Upper lobe of right lung (tissue), 1 donor: ENCODE measurements at regions of chr12 and their contacts with region 1.

Region 1: GRCh38 chr12:106386813-106387535 is 29.4 kb downstream of the POLR3B start:
- DNase-seq: no peak
- ATAC-seq: no peak
- H3K4me3 ChIP-seq: no peak overlapping the region
- H3K27ac ChIP-seq: no peak overlapping the region
- H3K4me1 ChIP-seq: no peaks in the 10 kb centered on the region
- H3K27me3 ChIP-seq: no peaks in the 10 kb centered on the region
- CTCF ChIP-seq: no peak

Region 2: GRCh38 chr12:106919910-106920544 is 533.1 kb after region 1 on chr12:
- intact Hi-C with region 1: loop called (anchors 5 kb)
- DNase-seq: no peak
- ATAC-seq: peak; percentile 68
- H3K4me3 ChIP-seq: no peak overlapping the region
- H3K27ac ChIP-seq: no peak overlapping the region
- H3K4me1 ChIP-seq: no peaks in the 10 kb centered on the region
- H3K27me3 ChIP-seq: peaks cover 12% of the 10 kb centered on the region
- CTCF ChIP-seq: peak; percentile 84

Region 3: GRCh38 chr12:107109741-107110719 is 723.1 kb after region 1 on chr12:
- intact Hi-C with region 1: loop called (anchors 5 kb)
- DNase-seq: no peak
- ATAC-seq: no peak
- H3K4me3 ChIP-seq: no peak overlapping the region
- H3K27ac ChIP-seq: no peak overlapping the region
- H3K4me1 ChIP-seq: peaks cover 1% of the 10 kb centered on the region
- H3K27me3 ChIP-seq: no peaks in the 10 kb centered on the region
- CTCF ChIP-seq: no peak